GM12878 (cell line): ENCODE measurements at regions of chr22 and their contacts with region 1.

Region 1: GRCh38 chr22:26993886-26994285 is 336.5 kb downstream of the MIAT start:
- DNase-seq: no peak
- ATAC-seq: no peak
- H3K4me3 ChIP-seq: no peak overlapping the region
- H3K27ac ChIP-seq: no peak overlapping the region
- H3K4me1 ChIP-seq: peaks cover 6% of the 10 kb centered on the region; the same call in 1 of the 2 replicates
- H3K27me3 ChIP-seq: no peaks in the 10 kb centered on the region
- CTCF ChIP-seq: no peak
- EP300 ChIP-seq: no peak
- POLR2A ChIP-seq: no peak
- RAD21 ChIP-seq: no peak

Region 2: DNA sequence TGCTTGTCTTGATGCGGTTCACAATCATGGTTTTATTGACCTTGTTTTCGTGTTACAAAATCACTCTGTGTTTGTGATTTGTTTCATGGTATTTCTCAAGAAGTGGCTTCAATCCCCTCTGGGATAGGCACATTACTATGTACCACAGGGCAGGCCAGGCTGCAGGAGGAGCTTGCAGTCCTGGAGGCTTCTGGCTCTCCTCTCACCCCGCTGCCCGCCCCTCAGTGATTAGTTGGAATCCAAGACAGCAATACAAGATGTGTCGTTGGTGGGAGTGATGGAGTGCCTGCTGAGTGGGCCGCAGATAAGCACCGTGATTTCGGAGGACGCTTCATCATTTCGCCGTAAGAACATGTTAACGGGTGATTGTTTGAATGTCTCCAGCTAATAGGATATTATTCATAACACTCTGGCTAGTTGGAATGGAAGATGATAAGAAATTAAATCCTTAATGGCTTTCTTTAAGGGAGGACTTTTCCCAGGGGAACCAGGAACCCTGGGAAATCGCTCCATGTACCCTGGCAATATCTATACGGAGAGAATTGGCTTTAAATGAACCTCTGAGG is 47.9 kb after region 1 on chr22:
- CTCF ChIA-PET with region 1: no interaction called
- POLR2A ChIA-PET with region 1: no interaction called
- RAD21 ChIA-PET with region 1: no interaction called
- SMC1A ChIA-PET with region 1: no interaction called
- in situ Hi-C with region 1: no loop called
- intact Hi-C with region 1: loop called (anchors 2 kb)
- DNase-seq: no peak
- ATAC-seq: no peak
- H3K4me3 ChIP-seq: no peak overlapping the region
- H3K27ac ChIP-seq: no peak overlapping the region
- H3K4me1 ChIP-seq: no peaks in the 10 kb centered on the region
- H3K27me3 ChIP-seq: no peaks in the 10 kb centered on the region
- CTCF ChIP-seq: no peak
- EP300 ChIP-seq: no peak
- POLR2A ChIP-seq: no peak
- RAD21 ChIP-seq: no peak